Tibial artery (tissue), 4 donors: ENCODE measurements at regions of chr18 and their contacts with region 1.

Region 1: GRCh38 chr18:35343936-35344735 is at the start of gene ZNF24:
- DNase-seq: peak; percentile 96 to 97
- H3K4me3 ChIP-seq: peak within 1 kb of the TSS; percentile 94 to 95
- H3K27ac ChIP-seq: peak within 1 kb of the TSS; percentile 99 to 100
- H3K4me1 ChIP-seq: peaks cover 0 to 44% (median 27%) of the 10 kb centered on the region in 4 donors
- H3K27me3 ChIP-seq: no peaks in the 10 kb centered on the region
- CTCF ChIP-seq: no peak

Region 2: DNA sequence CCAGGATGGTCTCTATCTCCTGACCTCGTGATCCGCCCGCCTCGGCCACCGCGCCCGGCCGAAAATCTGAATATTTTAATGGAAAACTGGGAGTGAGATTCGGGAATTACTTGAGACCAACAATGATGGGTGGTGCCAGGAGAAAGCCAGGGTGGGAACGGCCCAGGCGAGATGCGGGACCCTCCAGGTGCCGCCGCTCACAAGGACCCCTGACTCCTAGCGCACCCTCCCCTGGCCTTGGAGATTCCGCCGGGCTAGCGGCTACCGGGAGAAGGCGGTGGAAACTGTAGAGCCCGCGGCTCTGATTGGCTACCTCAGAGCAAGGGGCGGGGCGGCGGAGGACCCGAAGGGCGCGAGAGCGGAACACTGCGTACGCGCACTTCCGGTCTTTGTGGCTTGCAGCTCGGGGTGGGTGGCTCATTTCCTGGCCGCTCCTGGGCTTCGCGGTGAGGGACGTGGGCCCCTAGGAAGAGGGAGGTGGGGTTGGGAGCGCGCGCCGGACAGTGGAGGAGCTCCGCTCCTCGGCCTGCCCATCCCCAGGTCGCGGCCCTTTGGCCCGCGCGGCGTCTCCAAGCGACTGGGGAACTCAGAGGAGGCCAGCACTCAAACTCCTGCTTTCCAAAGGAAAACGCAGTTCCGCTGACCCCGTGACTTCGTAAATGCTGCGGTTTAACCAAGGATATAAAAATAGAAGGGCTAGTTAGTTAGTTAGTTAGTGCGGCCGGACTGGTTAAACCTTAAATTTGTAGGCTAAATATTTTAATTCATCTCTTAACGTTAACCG is 103.3 kb before region 1 on chr18 and contains the start of gene ZNF397:
- intact Hi-C with region 1: loop called (anchors 2 kb)
- DNase-seq: peak; percentile 98 to 99
- H3K4me3 ChIP-seq: peak within 1 kb of the TSS; percentile 71 to 88
- H3K27ac ChIP-seq: peak within 1 kb of the TSS; percentile 97 to 98
- H3K4me1 ChIP-seq: peaks cover 0 to 22% (median 11%) of the 10 kb centered on the region in 4 donors
- H3K27me3 ChIP-seq: no peaks in the 10 kb centered on the region
- CTCF ChIP-seq: peak in 1 of 2 experiments; percentile 21

Region 3: DNA sequence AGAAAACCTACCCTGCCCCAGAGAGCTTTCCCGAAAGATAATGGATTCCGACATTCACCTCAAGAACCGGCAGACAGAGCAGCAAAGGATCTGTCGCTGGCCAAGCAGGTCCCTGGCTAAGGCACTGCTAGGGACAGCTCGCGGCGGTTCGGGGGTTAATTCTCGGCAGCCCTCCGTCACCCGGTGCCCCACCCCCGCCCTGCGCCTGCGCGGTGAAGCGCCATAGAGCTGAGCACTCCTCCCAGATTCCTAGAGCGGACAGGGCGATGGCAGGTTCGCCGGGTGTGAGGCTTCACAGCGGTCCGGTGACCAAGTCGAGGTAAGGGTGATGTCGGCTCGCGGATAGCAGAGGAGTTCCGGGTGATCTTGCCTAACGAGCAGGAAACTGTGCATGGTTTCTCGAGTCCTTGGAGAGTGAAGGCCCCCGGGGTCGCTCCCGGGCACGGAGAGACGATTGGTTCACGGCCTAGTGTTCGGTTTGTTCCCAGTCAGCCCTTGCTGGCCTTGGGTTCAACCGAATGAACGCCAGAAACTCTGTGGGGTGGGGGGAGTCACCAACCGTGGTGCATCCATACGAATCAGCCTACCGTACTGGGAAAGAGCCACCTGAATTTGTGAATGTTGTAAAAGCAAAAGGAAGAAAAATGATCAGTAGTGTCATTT is 53.9 kb before region 1 on chr18 and contains the start of gene ZSCAN30:
- intact Hi-C with region 1: loop called (anchors 5 kb)
- DNase-seq: peak; percentile 94 to 97
- H3K4me3 ChIP-seq: peak within 1 kb of the TSS; percentile 60 to 79
- H3K27ac ChIP-seq: peak within 1 kb of the TSS; percentile 82 to 84
- H3K4me1 ChIP-seq: peaks cover 0 to 25% (median 13%) of the 10 kb centered on the region in 4 donors
- H3K27me3 ChIP-seq: no peaks in the 10 kb centered on the region
- CTCF ChIP-seq: no peak